ENCODE measurements at regions of chr9 and their contacts with region 1.

Region 1: GRCh38 chr9:32877639-32878217 is 94.4 kb downstream of the TMEM215 start:
- DNase-seq: no peak
- ATAC-seq: no peak
- H3K4me3 ChIP-seq: no peak overlapping the region
- H3K27ac ChIP-seq: no peak overlapping the region
- H3K4me1 ChIP-seq: no peaks in the 10 kb centered on the region
- H3K27me3 ChIP-seq: no peaks in the 10 kb centered on the region
- CTCF ChIP-seq: no peak
- POLR2A ChIP-seq: no peak
- RAD21 ChIP-seq: no peak

Region 2: GRCh38 chr9:32866273-32866672 is 11.5 kb before region 1 on chr9:
- CTCF ChIA-PET with region 1: no interaction called
- POLR2A ChIA-PET with region 1: no interaction called
- dilution Hi-C with region 1: no loop called
- in situ Hi-C with region 1: no loop called
- intact Hi-C with region 1: loop called (anchors 2 kb)
- DNase-seq: no peak
- ATAC-seq: no peak
- H3K4me3 ChIP-seq: no peak overlapping the region
- H3K27ac ChIP-seq: no peak overlapping the region
- H3K4me1 ChIP-seq: no peaks in the 10 kb centered on the region
- H3K27me3 ChIP-seq: no peaks in the 10 kb centered on the region; the same call in none of the 2 replicates
- CTCF ChIP-seq: no peak
- POLR2A ChIP-seq: no peak
- RAD21 ChIP-seq: no peak

Region 3: DNA sequence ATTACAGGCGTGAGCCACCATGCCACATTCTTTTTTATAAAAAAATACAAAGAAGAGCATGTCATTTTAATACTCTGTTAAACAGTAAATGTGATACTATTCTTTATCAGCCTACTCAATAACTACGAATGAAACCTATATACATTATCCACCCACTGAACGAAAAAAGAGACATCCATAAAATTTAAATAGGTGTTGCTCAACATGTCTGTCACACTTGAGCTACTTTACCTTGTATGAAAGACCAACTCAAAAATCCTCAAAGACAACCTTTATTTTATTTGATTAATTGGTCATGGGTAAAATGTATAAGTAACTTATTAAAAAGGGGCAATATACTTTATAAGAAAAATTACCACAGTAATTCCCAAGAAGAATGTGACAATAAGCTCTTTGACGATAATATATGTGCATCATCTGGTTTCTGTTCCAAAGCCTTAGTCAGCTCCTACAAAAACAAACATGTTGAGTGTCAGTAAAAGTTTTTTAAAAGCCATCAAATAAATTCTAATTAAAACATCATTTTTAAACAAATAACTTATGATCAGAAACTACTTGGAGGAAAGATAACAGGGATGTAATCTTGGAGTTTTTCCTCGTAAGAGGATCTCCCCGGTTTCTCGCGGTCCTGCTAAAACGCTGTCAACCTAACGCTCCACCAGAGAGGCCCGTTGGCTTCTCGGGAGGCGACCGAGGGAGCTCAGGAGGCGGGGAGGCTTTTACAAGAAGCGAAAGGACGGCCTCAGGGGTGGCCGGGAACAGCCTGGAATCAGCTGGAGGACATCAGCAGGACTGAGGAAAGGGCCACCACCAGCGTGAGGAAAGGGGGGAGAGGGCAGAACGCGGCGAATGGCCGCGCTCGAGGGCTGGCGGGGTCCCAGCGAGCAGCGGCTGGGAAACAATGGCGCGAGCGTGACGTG is 632.8 kb after region 1 on chr9:
- CTCF ChIA-PET with region 1: no interaction called
- POLR2A ChIA-PET with region 1: no interaction called
- dilution Hi-C with region 1: no loop called
- in situ Hi-C with region 1: no loop called
- intact Hi-C with region 1: no loop called
- DNase-seq: peak; percentile 62
- ATAC-seq: peak; percentile 59
- H3K4me3 ChIP-seq: peak overlapping the region; percentile 92
- H3K27ac ChIP-seq: peak overlapping the region; percentile 99
- H3K4me1 ChIP-seq: peaks cover 8% of the 10 kb centered on the region
- H3K27me3 ChIP-seq: no peaks in the 10 kb centered on the region
- CTCF ChIP-seq: no peak
- POLR2A ChIP-seq: peak; percentile 83
- RAD21 ChIP-seq: no peak; the same call in 1 of the 2 replicates

Measured in IMR-90 (cell line).